AG04450 (cell line): ENCODE measurements at regions of chr22 and their contacts with region 1.

Region 1: GRCh38 chr22:40645579-40646197 is 9.2 kb upstream of the MRTFA start:
- DNase-seq: no peak
- H3K4me3 ChIP-seq: no peak overlapping the region
- H3K27ac ChIP-seq: no peak overlapping the region
- H3K27me3 ChIP-seq: no peaks in the 10 kb centered on the region
- CTCF ChIP-seq: no peak

Region 2: GRCh38 chr22:40509401-40510134 is 136.1 kb before region 1 on chr22:
- CTCF ChIA-PET with region 1: interaction called, 10 read pairs
- POLR2A ChIA-PET with region 1: no interaction called
- DNase-seq: peak; percentile 79
- H3K4me3 ChIP-seq: 0 out of 2 replicates have a peak overlapping the region, but pooled peaks have one; percentile 7
- H3K27ac ChIP-seq: peak overlapping the region; percentile 94
- H3K27me3 ChIP-seq: no peaks in the 10 kb centered on the region
- CTCF ChIP-seq: no peak

Region 3: GRCh38 chr22:40533712-40534378 is 111.8 kb before region 1 on chr22:
- CTCF ChIA-PET with region 1: interaction called, 17 read pairs
- POLR2A ChIA-PET with region 1: no interaction called
- DNase-seq: no peak
- H3K4me3 ChIP-seq: peak overlapping the region; percentile 5
- H3K27ac ChIP-seq: no peak overlapping the region
- H3K27me3 ChIP-seq: no peaks in the 10 kb centered on the region
- CTCF ChIP-seq: no peak

Region 4: GRCh38 chr22:40618400-40618799 is 27.3 kb before region 1 on chr22:
- CTCF ChIA-PET with region 1: no interaction called
- POLR2A ChIA-PET with region 1: no interaction called
- DNase-seq: no peak
- H3K4me3 ChIP-seq: no peak overlapping the region
- H3K27ac ChIP-seq: no peak overlapping the region
- H3K27me3 ChIP-seq: no peaks in the 10 kb centered on the region
- CTCF ChIP-seq: no peak